Gastrocnemius medialis (tissue), 4 donors: ENCODE measurements at regions of chr1 and their contacts with region 1.

Region 1: DNA sequence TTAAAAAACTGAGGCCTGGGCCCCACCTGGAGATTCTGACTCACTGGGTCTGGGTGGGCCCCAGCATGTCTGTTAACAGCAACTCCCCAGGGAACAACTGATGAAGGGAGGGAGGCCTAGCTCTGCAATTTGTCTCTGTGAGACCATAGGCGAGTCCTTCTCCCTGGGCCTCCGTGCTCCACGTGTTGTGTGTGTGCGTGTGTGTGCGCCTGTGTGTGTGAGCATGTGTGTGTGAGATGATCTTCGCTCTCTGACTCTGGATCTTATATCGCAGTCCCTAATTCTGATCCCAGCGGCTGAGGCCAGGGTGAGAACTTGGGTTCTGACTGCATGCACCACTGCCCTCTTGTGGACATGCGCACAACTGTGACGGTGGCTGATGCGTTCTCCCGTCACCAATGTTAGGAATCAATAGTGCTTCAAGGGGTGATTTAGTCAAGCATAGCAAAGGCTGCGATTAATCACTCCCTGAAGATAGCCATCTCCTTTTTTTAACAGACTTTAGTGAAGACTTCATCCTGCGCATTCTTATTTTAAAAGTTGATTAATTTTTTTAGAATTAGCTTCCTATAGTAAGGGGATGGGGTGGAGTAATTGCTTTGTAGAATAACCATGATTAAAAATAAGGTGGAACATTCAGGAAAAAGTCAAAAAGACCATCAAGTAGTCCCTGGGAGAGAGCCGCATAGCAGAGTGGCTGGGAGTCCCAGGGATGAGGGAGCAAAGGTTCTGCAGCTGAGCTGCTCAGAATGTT is 62.4 kb upstream of the USP24 start:
- DNase-seq: peak; percentile 66 to 75
- ATAC-seq: peak; percentile 74 to 83
- H3K4me3 ChIP-seq: no peak overlapping the region
- H3K27ac ChIP-seq: peak overlapping the region; percentile 35 to 80 (median 75)
- H3K4me1 ChIP-seq: peaks cover 13 to 19% of the 10 kb centered on the region in 2 donors
- H3K27me3 ChIP-seq: no peaks in the 10 kb centered on the region
- CTCF ChIP-seq: peak; percentile 83 to 95 (median 89)
- POLR2A ChIP-seq: no peak

Region 2: GRCh38 chr1:55140546-55140983 is 137.0 kb before region 1 on chr1:
- in situ Hi-C with region 1: loop called (anchors 5 kb)
- intact Hi-C with region 1: loop called (anchors 1 kb)
- DNase-seq: peak; percentile 64 to 65
- ATAC-seq: peak; percentile 87 to 96
- H3K4me3 ChIP-seq: no peak overlapping the region
- H3K27ac ChIP-seq: peak overlapping the region in 3 of 4 donors; percentile 40 to 48 (median 45)
- H3K4me1 ChIP-seq: peaks cover 0 to 4% of the 10 kb centered on the region in 2 donors
- H3K27me3 ChIP-seq: no peaks in the 10 kb centered on the region
- CTCF ChIP-seq: peak; percentile 69 to 91 (median 78)
- POLR2A ChIP-seq: no peak

Region 3: GRCh38 chr1:55146781-55147180 is 130.8 kb before region 1 on chr1:
- in situ Hi-C with region 1: loop called in 3 of 4 experiments (anchors 5 kb)
- intact Hi-C with region 1: no loop called
- DNase-seq: peak in 1 of 2 donors; percentile 16
- ATAC-seq: no peak
- H3K4me3 ChIP-seq: no peak overlapping the region
- H3K27ac ChIP-seq: no peak overlapping the region
- H3K4me1 ChIP-seq: peaks cover 12 to 15% of the 10 kb centered on the region in 2 donors
- H3K27me3 ChIP-seq: no peaks in the 10 kb centered on the region
- CTCF ChIP-seq: no peak
- POLR2A ChIP-seq: no peak

Region 4: GRCh38 chr1:55572878-55573734 is 295.6 kb after region 1 on chr1:
- in situ Hi-C with region 1: no loop called
- intact Hi-C with region 1: no loop called
- DNase-seq: peak; percentile 44 to 66
- ATAC-seq: peak; percentile 86 to 87
- H3K4me3 ChIP-seq: no peak overlapping the region
- H3K27ac ChIP-seq: peak overlapping the region in 1 of 4 donors; percentile 26
- H3K4me1 ChIP-seq: peaks cover 8 to 13% of the 10 kb centered on the region in 2 donors
- H3K27me3 ChIP-seq: no peaks in the 10 kb centered on the region
- CTCF ChIP-seq: no peak
- POLR2A ChIP-seq: no peak